Esophagus squamous epithelium (tissue), 5 donors: ENCODE measurements at regions of chr9 and their contacts with region 1.

Region 1: GRCh38 chr9:132973713-132974112 is 4.8 kb upstream of the GFI1B start:
- DNase-seq: no peak
- H3K4me3 ChIP-seq: no peak overlapping the region
- H3K27ac ChIP-seq: no peak overlapping the region
- H3K4me1 ChIP-seq: peaks cover 0 to 21% (median 8%) of the 10 kb centered on the region in 3 donors
- H3K27me3 ChIP-seq: peaks cover 0 to 81% (median 4%) of the 10 kb centered on the region in 4 donors
- CTCF ChIP-seq: no peak
- POLR2A ChIP-seq: no peak

Region 2: DNA sequence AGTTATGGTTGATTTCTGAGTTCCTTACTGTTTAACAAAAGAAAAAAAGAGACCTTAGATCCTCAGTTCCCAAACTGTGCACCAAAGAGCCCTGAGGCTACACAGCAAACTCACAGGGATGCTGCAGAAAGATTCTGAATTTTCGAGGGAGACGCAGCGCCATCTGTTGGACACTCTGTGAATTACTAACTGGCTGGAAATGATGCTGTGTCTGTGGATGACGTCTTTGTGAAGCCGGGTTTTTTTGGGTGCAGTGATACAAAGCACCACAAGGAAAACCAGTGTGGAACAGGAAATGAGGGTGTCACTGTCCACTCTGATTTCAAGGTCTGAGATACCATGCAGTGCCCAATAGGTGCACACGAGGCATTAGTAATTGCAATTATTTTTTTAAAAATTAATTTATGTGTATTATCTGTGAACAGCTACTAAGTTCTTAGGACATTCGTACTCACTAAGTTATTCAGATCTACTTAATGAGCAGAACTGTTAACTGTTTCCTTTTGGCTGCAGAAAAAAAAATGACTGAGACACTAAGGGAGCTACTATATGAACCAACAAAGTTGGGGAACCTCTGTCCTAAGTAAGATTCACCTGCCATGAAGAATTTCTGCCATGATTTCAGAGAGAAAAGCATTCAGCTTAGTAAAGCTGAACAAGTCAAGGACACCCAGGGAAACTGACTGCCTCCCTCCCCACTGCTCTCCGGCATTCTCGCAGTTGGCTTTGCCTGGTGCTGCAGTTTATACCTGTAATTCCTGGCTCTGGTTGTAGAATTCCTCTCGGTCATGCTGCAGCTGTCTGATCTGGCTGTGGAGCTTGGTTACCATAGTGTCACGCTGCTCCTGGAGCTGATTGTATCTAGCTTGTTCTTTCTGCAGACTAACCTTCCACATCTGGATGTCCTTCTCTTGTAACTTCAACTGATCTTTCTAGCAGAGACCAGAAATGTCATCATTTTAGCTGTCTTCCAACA is 71.6 kb before region 1 on chr9:
- intact Hi-C with region 1: loop called (anchors 10 kb)
- DNase-seq: no peak
- H3K4me3 ChIP-seq: no peak overlapping the region
- H3K27ac ChIP-seq: peak overlapping the region in 1 of 4 donors; percentile 51
- H3K4me1 ChIP-seq: peaks cover 0 to 1% (median 0%) of the 10 kb centered on the region in 3 donors
- H3K27me3 ChIP-seq: no peaks in the 10 kb centered on the region
- CTCF ChIP-seq: peak; percentile 69 to 97 (median 90)
- POLR2A ChIP-seq: no peak